Endothelial cell of umbilical vein (primary cell): ENCODE measurements at regions of chr5 and their contacts with region 1.

Region 1: GRCh38 chr5:148826053-148826738 is at the start of gene ADRB2:
- DNase-seq: peak; percentile 94
- H3K4me3 ChIP-seq: peak within 1 kb of the TSS; percentile 15 to 62 (median 49)
- H3K27ac ChIP-seq: peak within 1 kb of the TSS; percentile 42
- H3K4me1 ChIP-seq: peaks cover 34% of the 10 kb centered on the region
- H3K27me3 ChIP-seq: no peaks in the 10 kb centered on the region
- CTCF ChIP-seq: no peak
- POLR2A ChIP-seq: peak; percentile 94
- total RNA-seq, gene ADRB2: 0.60 and 0.86 TPM in 2 replicates

Region 2: GRCh38 chr5:148912714-148913398 is 86.7 kb after region 1 on chr5:
- CTCF ChIA-PET with region 1: interaction called, 9 read pairs
- POLR2A ChIA-PET with region 1: interaction called, 3 read pairs
- dilution Hi-C with region 1: no loop called
- intact Hi-C with region 1: loop called (anchors 1 kb)
- DNase-seq: peak; percentile 79
- H3K4me3 ChIP-seq: no peak overlapping the region
- H3K27ac ChIP-seq: peak overlapping the region; percentile 96
- H3K4me1 ChIP-seq: peaks cover 55% of the 10 kb centered on the region
- H3K27me3 ChIP-seq: no peaks in the 10 kb centered on the region
- CTCF ChIP-seq: peak in 1 of 2 donors; percentile 4
- POLR2A ChIP-seq: no peak

Region 3: GRCh38 chr5:148963664-148964063 is 137.5 kb after region 1 on chr5:
- CTCF ChIA-PET with region 1: interaction called, 149 read pairs
- POLR2A ChIA-PET with region 1: no interaction called
- dilution Hi-C with region 1: no loop called
- intact Hi-C with region 1: loop called (anchors 1 kb)
- DNase-seq: no peak
- H3K4me3 ChIP-seq: no peak overlapping the region
- H3K27ac ChIP-seq: no peak overlapping the region
- H3K4me1 ChIP-seq: peaks cover 16% of the 10 kb centered on the region
- H3K27me3 ChIP-seq: no peaks in the 10 kb centered on the region
- CTCF ChIP-seq: no peak
- POLR2A ChIP-seq: no peak

Region 4: DNA sequence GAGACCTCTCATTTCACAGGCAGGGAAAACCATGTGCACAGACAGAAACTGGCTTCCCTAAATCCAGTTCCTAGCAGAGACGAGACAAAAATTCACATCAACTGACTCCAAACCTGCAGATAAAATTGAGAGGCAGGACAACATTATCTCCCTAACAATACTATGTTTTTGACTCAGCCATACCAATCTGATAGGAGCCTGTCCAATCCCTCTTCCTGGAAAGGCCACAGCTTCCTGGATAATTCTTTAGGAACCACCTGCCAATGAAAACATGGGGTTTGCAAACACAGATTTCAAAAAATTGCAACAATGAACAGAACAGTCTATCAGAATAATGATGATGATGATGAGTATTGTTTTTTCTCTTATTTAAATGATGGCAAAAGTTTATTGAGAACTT is 214.2 kb after region 1 on chr5:
- CTCF ChIA-PET with region 1: interaction called, 30 read pairs
- POLR2A ChIA-PET with region 1: no interaction called
- dilution Hi-C with region 1: no loop called
- intact Hi-C with region 1: loop called (anchors 1 kb)
- DNase-seq: peak; percentile 83
- H3K4me3 ChIP-seq: no peak overlapping the region
- H3K27ac ChIP-seq: peak overlapping the region; percentile 57
- H3K4me1 ChIP-seq: peaks cover 57% of the 10 kb centered on the region
- H3K27me3 ChIP-seq: no peaks in the 10 kb centered on the region
- CTCF ChIP-seq: no peak
- POLR2A ChIP-seq: peak; percentile 60

Region 5: DNA sequence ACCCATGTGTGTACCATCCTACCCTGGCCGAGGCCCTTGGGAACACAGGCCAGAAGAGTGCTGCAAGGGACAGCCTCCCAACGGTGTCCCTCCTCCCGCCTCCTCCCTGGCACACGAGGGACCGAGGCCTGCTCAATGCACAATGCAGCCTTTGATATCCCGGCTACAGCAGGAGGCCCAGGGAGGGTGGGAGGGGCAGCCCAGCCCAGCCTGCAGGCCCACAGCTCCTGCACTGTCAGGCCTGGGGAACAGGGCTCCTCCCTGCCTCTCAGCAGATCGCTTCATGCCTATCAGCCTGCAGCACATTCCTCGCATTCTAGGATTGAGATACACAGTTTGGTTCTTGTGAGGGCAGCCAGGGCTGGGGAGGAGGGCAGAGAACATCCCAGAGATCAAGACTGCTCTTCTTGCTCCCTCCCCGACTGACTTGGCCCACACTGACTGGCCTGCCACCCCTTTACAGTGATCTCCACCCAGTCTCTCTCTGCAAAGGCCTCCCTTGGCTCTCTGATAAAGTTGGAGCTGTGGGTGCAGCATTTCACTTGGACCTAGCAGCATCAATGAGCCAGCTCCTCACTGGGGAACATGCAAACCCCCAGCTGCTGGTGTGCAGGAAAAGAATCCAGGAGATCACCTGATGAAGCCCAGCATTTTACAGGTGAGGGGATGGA is 237.0 kb after region 1 on chr5 and contains the start of gene SH3TC2:
- CTCF ChIA-PET with region 1: no interaction called
- POLR2A ChIA-PET with region 1: no interaction called
- dilution Hi-C with region 1: no loop called
- intact Hi-C with region 1: loop called (anchors 1 kb)
- DNase-seq: peak; percentile 28
- H3K4me3 ChIP-seq: no peak within 1 kb of the TSS
- H3K27ac ChIP-seq: peak within 1 kb of the TSS; percentile 97
- H3K4me1 ChIP-seq: peaks cover 39% of the 10 kb centered on the region
- H3K27me3 ChIP-seq: no peaks in the 10 kb centered on the region
- CTCF ChIP-seq: no peak
- POLR2A ChIP-seq: peak; percentile 18
- total RNA-seq, gene SH3TC2: 3.3 and 4.3 TPM in 2 replicates